Naive thymus-derived CD4-positive, alpha-beta T cell (primary cell): ENCODE measurements at regions of chr7 and their contacts with region 1.

Region 1: DNA sequence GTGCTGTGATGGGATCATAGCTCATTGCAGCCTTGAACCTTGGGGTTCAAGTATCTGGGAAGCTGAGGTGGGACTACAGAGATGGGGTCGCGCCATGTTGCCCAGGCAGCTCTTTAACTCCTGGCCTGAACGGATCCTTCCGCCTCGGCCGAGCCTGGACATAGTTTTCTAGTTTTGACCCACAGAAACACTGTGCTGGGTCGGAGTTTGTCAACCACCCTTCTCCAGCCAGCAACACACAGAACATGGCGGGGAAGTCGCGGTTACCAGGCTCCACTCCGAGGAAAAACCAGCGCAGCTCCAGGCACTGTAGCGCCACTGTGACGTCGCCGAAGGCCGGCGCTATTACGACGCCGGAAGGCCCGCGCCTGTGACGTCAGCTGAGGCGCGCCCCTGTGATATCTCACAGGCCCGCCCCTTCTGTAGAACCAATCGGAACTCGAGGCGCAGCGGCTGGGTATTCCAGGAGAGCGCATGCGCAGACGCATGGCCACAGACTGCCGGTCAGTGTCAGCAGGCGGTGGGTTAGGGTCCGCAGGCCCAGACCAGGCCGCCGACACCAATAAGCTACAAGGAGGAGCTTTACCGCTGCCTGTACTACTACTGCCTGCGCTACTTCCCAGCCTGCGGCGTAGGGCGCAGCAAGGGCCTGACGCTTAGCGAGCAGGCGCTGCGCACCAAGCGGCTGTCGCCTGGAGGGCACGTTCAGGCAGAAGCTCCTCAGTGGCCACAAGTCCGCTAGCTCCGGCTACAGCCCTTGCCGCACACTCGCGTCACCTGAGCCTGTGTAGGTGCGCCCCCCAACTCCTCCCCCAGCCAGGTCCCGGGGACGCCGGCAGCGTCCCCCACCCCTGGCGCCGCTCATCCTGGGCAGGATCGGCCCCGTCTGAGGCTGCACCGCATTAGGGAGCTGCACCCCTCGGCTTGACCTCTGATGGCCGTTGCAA is 135.2 kb upstream of the KCTD7 start:
- DNase-seq: peak; percentile 94 to 98 (median 97)
- ATAC-seq: peak; percentile 97
- H3K4me3 ChIP-seq: peak overlapping the region; percentile 89
- H3K4me3 Mint-ChIP-seq: peak overlapping the region; percentile 84 to 96 (median 94)
- H3K27ac ChIP-seq: peak overlapping the region; percentile 92
- H3K27ac Mint-ChIP-seq: peak overlapping the region; percentile 95 to 100 (median 98)
- H3K4me1 ChIP-seq: peaks cover 4 to 8% of the 10 kb centered on the region in 2 donors
- H3K4me1 Mint-ChIP-seq: peaks cover 0 to 32% (median 17%) of the 10 kb centered on the region in 7 donors
- H3K27me3 ChIP-seq: no peaks in the 10 kb centered on the region
- H3K27me3 Mint-ChIP-seq: no peaks in the 10 kb centered on the region

Region 2: DNA sequence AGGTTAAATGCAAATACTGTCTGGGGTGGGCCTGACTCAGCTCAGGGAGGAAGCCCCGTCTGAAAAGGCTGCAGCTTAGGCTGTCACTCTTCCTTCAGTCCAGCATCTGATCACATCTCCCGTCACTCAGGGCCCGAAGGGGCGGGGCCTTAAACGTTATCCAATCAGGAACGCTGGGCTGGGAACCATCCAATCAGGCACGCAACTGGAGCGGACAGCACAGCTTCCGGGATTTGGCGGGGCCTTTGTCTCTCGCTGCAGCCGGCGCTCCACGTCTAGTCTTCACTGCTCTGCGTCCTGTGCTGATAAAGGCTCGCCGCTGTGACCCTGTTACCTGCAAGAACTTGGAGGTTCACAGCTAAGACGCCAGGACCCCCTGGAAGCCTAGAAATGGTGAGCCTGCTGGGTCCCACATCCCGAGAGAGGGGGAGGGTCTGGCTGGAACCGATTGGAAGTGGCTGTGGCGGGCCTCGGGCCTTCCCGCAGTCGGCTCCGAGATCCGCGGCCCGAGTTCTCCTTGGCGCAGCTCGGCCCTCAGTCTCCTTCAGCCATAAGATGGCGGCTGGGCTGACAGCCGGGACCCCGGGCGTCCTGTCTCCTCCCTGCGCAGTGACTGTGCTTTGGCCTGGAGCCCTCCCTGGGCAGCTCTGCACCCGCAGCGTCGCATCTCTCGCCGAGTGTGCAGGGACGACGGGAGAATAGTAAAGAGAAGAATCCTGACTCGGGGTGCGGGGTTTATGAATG is 1119.7 kb before region 1 on chr7 and contains the start of gene ZNF92:
- CTCF ChIA-PET with region 1: no interaction called
- POLR2A ChIA-PET with region 1: interaction called, 4 read pairs
- intact Hi-C with region 1: loop called in 1 of 2 experiments (anchors 10 kb)
- DNase-seq: peak; percentile 84 to 95 (median 94)
- ATAC-seq: peak; percentile 99
- H3K4me3 ChIP-seq: peak within 1 kb of the TSS; percentile 87
- H3K4me3 Mint-ChIP-seq: peak within 1 kb of the TSS; percentile 90 to 98 (median 96)
- H3K27ac ChIP-seq: peak within 1 kb of the TSS; percentile 82
- H3K27ac Mint-ChIP-seq: peak within 1 kb of the TSS; percentile 87 to 96 (median 93)
- H3K4me1 ChIP-seq: peaks cover 8 to 21% of the 10 kb centered on the region in 2 donors
- H3K4me1 Mint-ChIP-seq: peaks cover 18 to 57% (median 49%) of the 10 kb centered on the region in 7 donors
- H3K27me3 ChIP-seq: no peaks in the 10 kb centered on the region
- H3K27me3 Mint-ChIP-seq: no peaks in the 10 kb centered on the region
- total RNA-seq, gene ZNF92: 16.3 to 22.5 (median 19.3) TPM

Region 3: DNA sequence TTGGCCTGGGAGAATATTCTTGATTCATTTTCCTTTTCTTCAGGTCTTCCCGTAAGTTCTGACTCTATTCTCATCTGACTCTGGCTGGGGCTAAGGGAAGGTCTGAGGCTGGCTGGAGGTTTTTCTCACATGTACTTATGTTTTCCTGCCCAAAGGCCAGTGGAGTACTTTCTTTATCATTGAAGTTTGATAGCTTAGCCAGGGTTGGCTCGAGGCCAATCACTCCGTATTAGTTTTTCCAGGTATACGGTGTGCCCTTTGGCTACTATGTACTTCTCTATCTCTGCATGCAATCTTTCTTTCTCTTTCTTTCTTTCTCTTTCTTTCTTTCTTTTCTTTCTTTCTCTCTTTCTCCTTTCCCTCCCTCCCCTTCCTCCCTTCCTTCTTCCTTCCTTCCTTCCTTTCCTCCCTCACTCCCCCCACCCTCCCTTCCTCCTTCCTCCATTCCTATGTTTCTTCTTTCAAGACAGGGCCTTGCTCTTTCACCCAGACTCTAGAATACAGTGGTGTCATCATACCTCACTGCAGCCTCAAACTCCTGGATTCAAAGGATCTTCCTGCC is 647.4 kb before region 1 on chr7:
- CTCF ChIA-PET with region 1: no interaction called
- POLR2A ChIA-PET with region 1: no interaction called
- intact Hi-C with region 1: no loop called
- DNase-seq: no peak
- ATAC-seq: no peak
- H3K4me3 ChIP-seq: no peak overlapping the region
- H3K4me3 Mint-ChIP-seq: no peak overlapping the region
- H3K27ac ChIP-seq: no peak overlapping the region
- H3K27ac Mint-ChIP-seq: no peak overlapping the region
- H3K4me1 ChIP-seq: no peaks in the 10 kb centered on the region
- H3K4me1 Mint-ChIP-seq: no peaks in the 10 kb centered on the region
- H3K27me3 ChIP-seq: no peaks in the 10 kb centered on the region
- H3K27me3 Mint-ChIP-seq: peaks cover 0 to 4% (median 0%) of the 10 kb centered on the region in 5 donors

Region 4: DNA sequence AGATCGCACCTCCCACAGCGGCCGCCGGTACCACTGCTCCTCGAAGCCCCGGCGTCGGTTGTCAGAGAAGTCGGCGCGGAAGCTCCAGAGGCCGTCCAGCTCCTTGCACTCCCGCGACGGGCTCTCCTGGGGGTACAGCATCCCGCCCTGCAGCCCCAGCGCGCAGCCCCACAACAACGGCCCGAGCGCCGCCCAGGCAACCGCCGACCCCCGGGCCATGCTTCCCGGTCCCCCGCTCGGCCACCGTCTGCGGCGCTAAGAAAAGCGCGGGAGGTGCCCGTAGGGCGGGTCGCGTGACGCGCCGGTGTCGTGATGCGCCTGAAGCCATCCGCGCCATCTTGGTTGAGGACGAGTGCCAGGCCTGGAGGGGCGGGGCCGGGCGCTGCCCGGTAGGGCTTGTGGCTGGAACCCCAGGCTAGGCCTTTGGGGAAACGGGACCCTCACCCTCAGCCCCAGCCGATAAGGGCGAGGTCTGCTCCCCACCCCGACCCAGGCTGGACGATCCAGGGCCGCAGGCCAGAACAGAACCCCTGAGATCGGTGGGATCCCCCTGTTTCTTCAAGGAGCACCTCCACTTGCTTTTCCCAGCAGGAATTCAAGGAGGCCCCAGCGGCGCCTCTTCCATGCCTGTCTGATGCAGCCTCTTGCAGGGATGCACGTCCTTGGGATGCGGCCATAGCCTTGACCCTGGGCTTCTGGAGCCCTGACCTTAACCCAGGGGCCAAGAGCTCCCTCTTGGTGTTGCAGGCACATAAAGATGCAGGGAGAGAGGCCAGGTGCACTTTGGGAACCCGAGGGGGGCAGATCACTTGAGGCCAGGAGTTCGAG is 511.3 kb before region 1 on chr7 and contains the start of gene GUSB:
- CTCF ChIA-PET with region 1: no interaction called
- POLR2A ChIA-PET with region 1: no interaction called
- intact Hi-C with region 1: loop called (anchors 1 to 2 kb)
- DNase-seq: peak; percentile 80 to 91 (median 86)
- ATAC-seq: peak; percentile 87
- H3K4me3 ChIP-seq: peak within 1 kb of the TSS; percentile 88
- H3K4me3 Mint-ChIP-seq: peak within 1 kb of the TSS; percentile 76 to 91 (median 80)
- H3K27ac ChIP-seq: peak within 1 kb of the TSS; percentile 78
- H3K27ac Mint-ChIP-seq: peak within 1 kb of the TSS; percentile 36 to 91 (median 64)
- H3K4me1 ChIP-seq: peaks cover 15 to 19% of the 10 kb centered on the region in 2 donors
- H3K4me1 Mint-ChIP-seq: peaks cover 0 to 21% (median 10%) of the 10 kb centered on the region in 7 donors
- H3K27me3 ChIP-seq: no peaks in the 10 kb centered on the region
- H3K27me3 Mint-ChIP-seq: no peaks in the 10 kb centered on the region
- total RNA-seq, gene GUSB: 41.8 to 62.5 (median 53.3) TPM

Region 5: GRCh38 chr7:66204822-66205740 is 288.4 kb before region 1 on chr7 and contains the start of gene TPST1:
- CTCF ChIA-PET with region 1: no interaction called
- POLR2A ChIA-PET with region 1: interaction called, 6 read pairs
- intact Hi-C with region 1: loop called in 1 of 2 experiments (anchors 2 kb)
- DNase-seq: peak; percentile 69 to 83 (median 78)
- ATAC-seq: peak; percentile 94
- H3K4me3 ChIP-seq: peak within 1 kb of the TSS; percentile 49
- H3K4me3 Mint-ChIP-seq: peak within 1 kb of the TSS; percentile 90 to 98 (median 92)
- H3K27ac ChIP-seq: peak within 1 kb of the TSS; percentile 60
- H3K27ac Mint-ChIP-seq: peak within 1 kb of the TSS in 8 of 9 donors; percentile 75 to 91 (median 83)
- H3K4me1 ChIP-seq: peaks cover 0 to 30% of the 10 kb centered on the region in 2 donors
- H3K4me1 Mint-ChIP-seq: peaks cover 26 to 57% (median 46%) of the 10 kb centered on the region in 7 donors
- H3K27me3 ChIP-seq: no peaks in the 10 kb centered on the region
- H3K27me3 Mint-ChIP-seq: peaks cover 0 to 48% (median 6%) of the 10 kb centered on the region in 5 donors
- total RNA-seq, gene TPST1: 0.70 to 5.0 (median 2.7) TPM

Region 6: GRCh38 chr7:66557608-66558143 is 64.2 kb after region 1 on chr7:
- CTCF ChIA-PET with region 1: no interaction called
- POLR2A ChIA-PET with region 1: no interaction called
- intact Hi-C with region 1: loop called in 1 of 2 experiments (anchors 1 kb)
- DNase-seq: peak; percentile 39 to 83 (median 68)
- ATAC-seq: peak; percentile 89
- H3K4me3 ChIP-seq: no peak overlapping the region
- H3K4me3 Mint-ChIP-seq: no peak overlapping the region
- H3K27ac ChIP-seq: no peak overlapping the region
- H3K27ac Mint-ChIP-seq: peak overlapping the region in 2 of 9 donors; percentile 51
- H3K4me1 ChIP-seq: peaks cover 0 to 4% of the 10 kb centered on the region in 2 donors
- H3K4me1 Mint-ChIP-seq: peaks cover 0 to 7% (median 4%) of the 10 kb centered on the region in 7 donors
- H3K27me3 ChIP-seq: no peaks in the 10 kb centered on the region
- H3K27me3 Mint-ChIP-seq: no peaks in the 10 kb centered on the region

Region 7: GRCh38 chr7:66654123-66654732 is 160.7 kb after region 1 on chr7:
- CTCF ChIA-PET with region 1: interaction called, 3 read pairs
- POLR2A ChIA-PET with region 1: interaction called, 8 read pairs
- intact Hi-C with region 1: loop called (anchors 1 kb)
- DNase-seq: peak; percentile 96 to 99 (median 97)
- ATAC-seq: peak; percentile 95
- H3K4me3 ChIP-seq: peak overlapping the region; percentile 94
- H3K4me3 Mint-ChIP-seq: peak overlapping the region; percentile 91 to 99 (median 98)
- H3K27ac ChIP-seq: peak overlapping the region; percentile 99
- H3K27ac Mint-ChIP-seq: peak overlapping the region; percentile 94 to 99 (median 98)
- H3K4me1 ChIP-seq: peaks cover 8% of the 10 kb centered on the region in 2 donors
- H3K4me1 Mint-ChIP-seq: peaks cover 17 to 56% (median 39%) of the 10 kb centered on the region in 7 donors
- H3K27me3 ChIP-seq: no peaks in the 10 kb centered on the region
- H3K27me3 Mint-ChIP-seq: no peaks in the 10 kb centered on the region

Region 8: DNA sequence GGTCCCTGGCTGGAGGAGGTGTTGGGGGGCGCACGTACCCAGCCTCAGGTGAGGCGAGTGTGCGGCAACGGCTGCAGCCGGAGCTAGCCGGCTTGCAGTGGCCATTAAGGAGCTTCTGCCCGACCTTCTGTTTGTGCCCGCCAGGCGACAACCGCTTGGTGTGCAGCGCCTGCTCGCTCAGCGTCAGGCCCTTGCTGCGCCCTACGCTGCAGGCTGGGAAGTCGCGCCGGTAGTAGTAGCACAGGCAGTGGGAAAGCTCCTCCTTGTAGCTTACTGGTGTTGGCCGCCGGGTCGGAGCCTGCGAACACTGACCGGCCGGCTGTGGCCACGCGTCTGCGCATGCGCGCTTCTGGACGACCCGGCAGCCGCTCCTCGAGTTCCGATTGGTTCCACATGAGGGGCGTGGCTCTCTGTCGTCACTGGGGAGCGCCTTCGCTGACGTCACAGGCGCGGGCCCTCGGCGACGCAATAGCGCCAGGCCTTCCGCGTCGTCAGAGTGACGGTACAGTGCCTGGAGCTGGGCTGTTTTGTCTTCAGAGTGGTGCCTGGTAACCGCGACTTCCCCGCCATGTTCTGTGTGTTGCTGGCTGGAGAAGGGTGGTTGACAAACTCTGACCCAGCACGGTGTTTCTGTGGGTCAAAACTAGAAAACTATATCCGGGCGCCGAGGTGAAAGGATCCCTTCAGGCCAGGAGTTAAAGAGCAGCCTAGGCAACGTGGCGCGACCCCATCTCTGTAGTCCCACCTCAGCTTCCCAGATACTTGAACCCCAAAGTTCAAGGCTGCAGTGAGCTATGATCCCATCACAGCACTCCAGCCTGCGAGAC is 351.3 kb after region 1 on chr7:
- CTCF ChIA-PET with region 1: no interaction called
- POLR2A ChIA-PET with region 1: interaction called, 32 read pairs
- intact Hi-C with region 1: loop called (anchors 1 kb)
- DNase-seq: peak; percentile 96 to 100 (median 100)
- ATAC-seq: peak; percentile 95
- H3K4me3 ChIP-seq: peak overlapping the region; percentile 99
- H3K4me3 Mint-ChIP-seq: peak overlapping the region; percentile 88 to 100 (median 96)
- H3K27ac ChIP-seq: peak overlapping the region; percentile 90
- H3K27ac Mint-ChIP-seq: peak overlapping the region; percentile 98 to 100 (median 100)
- H3K4me1 ChIP-seq: peaks cover 5 to 11% of the 10 kb centered on the region in 2 donors
- H3K4me1 Mint-ChIP-seq: peaks cover 10 to 29% (median 26%) of the 10 kb centered on the region in 7 donors
- H3K27me3 ChIP-seq: no peaks in the 10 kb centered on the region
- H3K27me3 Mint-ChIP-seq: peaks cover 0 to 3% (median 0%) of the 10 kb centered on the region in 5 donors